CD8-positive, alpha-beta memory T cell (primary cell): ENCODE measurements at regions of chr17 and their contacts with region 1.

Region 1: GRCh38 chr17:77088455-77089123 is 52.2 kb upstream of the SEC14L1 start:
- DNase-seq: peak; percentile 78 to 92 (median 86)
- H3K4me3 ChIP-seq: peak overlapping the region; percentile 80
- H3K4me3 Mint-ChIP-seq: peak overlapping the region; percentile 90 to 99 (median 98)
- H3K27ac ChIP-seq: peak overlapping the region; percentile 88
- H3K27ac Mint-ChIP-seq: peak overlapping the region; percentile 94 to 99 (median 98)
- H3K4me1 ChIP-seq: peaks cover 28% of the 10 kb centered on the region
- H3K4me1 Mint-ChIP-seq: peaks cover 45 to 61% (median 57%) of the 10 kb centered on the region in 3 donors
- H3K27me3 ChIP-seq: peaks cover 3% of the 10 kb centered on the region
- H3K27me3 Mint-ChIP-seq: peaks cover 3 to 6% of the 10 kb centered on the region in 2 donors

Region 2: GRCh38 chr17:77036807-77037381 is 51.7 kb before region 1 on chr17:
- CTCF ChIA-PET with region 1: no interaction called
- POLR2A ChIA-PET with region 1: no interaction called
- DNase-seq: no peak
- H3K4me3 ChIP-seq: no peak overlapping the region
- H3K4me3 Mint-ChIP-seq: no peak overlapping the region
- H3K27ac ChIP-seq: no peak overlapping the region
- H3K27ac Mint-ChIP-seq: no peak overlapping the region
- H3K4me1 ChIP-seq: no peaks in the 10 kb centered on the region
- H3K4me1 Mint-ChIP-seq: no peaks in the 10 kb centered on the region
- H3K27me3 ChIP-seq: no peaks in the 10 kb centered on the region
- H3K27me3 Mint-ChIP-seq: peaks cover 6 to 40% of the 10 kb centered on the region in 2 donors

Region 3: DNA sequence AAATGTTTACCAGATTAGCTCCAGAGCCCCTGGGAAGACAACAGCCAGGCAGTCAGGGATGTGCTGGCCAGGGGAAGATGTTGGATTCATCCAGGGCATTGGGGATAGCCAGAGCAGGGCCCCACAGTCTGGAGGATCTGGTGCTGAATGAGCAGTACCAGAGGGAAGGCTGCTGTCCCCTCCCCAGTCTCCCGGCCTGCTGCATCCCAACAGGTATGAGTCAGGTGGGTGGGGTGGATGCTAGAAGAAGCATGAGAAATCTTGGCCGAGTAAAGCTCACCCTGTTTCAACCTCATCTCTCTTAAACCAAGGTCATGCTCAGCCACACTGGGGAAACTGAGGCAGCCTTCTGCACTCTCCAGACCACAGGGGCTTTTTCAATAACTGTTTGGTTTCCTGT is 19.7 kb before region 1 on chr17:
- CTCF ChIA-PET with region 1: interaction called, 11 read pairs
- POLR2A ChIA-PET with region 1: no interaction called
- DNase-seq: no peak
- H3K4me3 ChIP-seq: no peak overlapping the region
- H3K4me3 Mint-ChIP-seq: no peak overlapping the region
- H3K27ac ChIP-seq: no peak overlapping the region
- H3K27ac Mint-ChIP-seq: no peak overlapping the region
- H3K4me1 ChIP-seq: no peaks in the 10 kb centered on the region
- H3K4me1 Mint-ChIP-seq: peaks cover 0 to 3% (median 0%) of the 10 kb centered on the region in 3 donors
- H3K27me3 ChIP-seq: no peaks in the 10 kb centered on the region
- H3K27me3 Mint-ChIP-seq: peaks cover 14 to 53% of the 10 kb centered on the region in 2 donors

Region 4: DNA sequence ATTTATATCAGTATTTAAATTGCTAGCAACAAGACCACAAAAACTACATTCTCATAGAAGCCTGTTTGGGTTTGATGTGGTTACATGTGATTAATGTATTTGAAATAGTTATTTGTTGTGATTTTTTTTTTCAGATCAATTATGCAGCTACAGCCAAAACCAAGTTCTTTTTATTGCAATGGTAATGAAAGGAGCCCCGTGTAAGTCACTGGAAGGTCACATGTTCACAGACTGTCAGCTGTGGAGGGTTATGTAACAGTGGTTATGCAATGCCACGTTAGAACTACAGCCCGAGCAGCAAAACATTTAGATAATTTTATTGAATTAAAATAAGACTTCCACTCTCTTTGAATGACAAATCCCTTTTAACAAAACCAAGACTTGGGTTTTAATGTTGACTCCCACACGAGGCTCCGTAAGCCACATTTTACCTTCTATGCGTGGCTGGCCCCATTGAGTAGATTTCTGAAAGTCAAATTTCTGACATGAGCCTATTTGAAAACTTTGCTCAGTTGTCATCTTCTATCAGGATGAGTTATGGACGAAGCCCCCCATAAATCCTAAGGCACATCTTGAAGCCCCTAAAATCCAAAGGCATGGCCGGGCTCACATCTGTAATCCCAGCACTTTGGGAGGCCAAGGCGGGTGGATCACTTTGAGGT is 10.4 kb after region 1 on chr17:
- CTCF ChIA-PET with region 1: interaction called, 14 read pairs
- POLR2A ChIA-PET with region 1: no interaction called
- DNase-seq: peak in 2 of 5 donors; percentile 30 to 78
- H3K4me3 ChIP-seq: no peak overlapping the region
- H3K4me3 Mint-ChIP-seq: no peak overlapping the region
- H3K27ac ChIP-seq: no peak overlapping the region
- H3K27ac Mint-ChIP-seq: peak overlapping the region; percentile 7 to 97 (median 89)
- H3K4me1 ChIP-seq: peaks cover 14% of the 10 kb centered on the region
- H3K4me1 Mint-ChIP-seq: peaks cover 18 to 27% (median 25%) of the 10 kb centered on the region in 3 donors
- H3K27me3 ChIP-seq: no peaks in the 10 kb centered on the region
- H3K27me3 Mint-ChIP-seq: no peaks in the 10 kb centered on the region

Region 5: DNA sequence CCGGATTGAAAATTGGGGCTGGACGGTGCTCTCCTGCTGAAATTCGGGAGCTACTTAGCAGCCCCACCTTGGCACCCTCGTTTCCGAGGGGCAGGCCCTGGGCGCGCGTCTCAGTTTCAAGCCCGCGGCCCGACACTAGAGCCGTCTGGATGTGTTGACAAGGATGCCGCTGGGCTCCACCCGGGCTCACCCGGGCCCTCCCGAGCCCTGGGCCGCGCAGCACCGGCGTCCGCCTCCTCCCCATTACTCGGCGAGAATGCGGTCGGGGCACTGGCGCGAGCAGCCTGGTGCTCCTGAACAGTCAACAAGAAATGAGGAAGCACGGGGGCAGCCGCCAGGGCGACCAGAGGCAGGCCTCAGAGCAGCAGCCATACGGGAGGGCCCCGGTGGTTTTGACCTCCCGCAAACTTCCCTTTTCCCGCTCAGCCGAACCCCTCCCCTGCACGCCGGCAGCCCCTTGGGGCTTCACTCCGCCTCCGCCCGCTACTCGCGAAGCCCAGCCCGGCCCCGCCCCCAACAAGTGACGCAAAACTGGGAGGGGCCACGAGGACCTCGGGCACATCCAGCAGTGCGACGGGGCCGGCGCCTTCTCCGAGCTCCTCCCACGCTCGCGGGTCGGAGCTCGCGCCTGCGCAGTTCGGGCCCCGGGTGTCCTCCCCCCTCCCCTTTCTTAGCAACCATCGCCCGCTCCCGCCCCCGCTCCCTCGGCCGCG is 51.7 kb after region 1 on chr17:
- CTCF ChIA-PET with region 1: interaction called, 16 read pairs
- POLR2A ChIA-PET with region 1: interaction called, 19 read pairs
- DNase-seq: peak; percentile 99 to 100 (median 100)
- H3K4me3 ChIP-seq: peak overlapping the region; percentile 84
- H3K4me3 Mint-ChIP-seq: peak overlapping the region; percentile 81 to 94 (median 84)
- H3K27ac ChIP-seq: peak overlapping the region; percentile 83
- H3K27ac Mint-ChIP-seq: peak overlapping the region; percentile 90 to 98 (median 94)
- H3K4me1 ChIP-seq: peaks cover 39% of the 10 kb centered on the region
- H3K4me1 Mint-ChIP-seq: peaks cover 38 to 61% (median 50%) of the 10 kb centered on the region in 3 donors
- H3K27me3 ChIP-seq: no peaks in the 10 kb centered on the region
- H3K27me3 Mint-ChIP-seq: peaks cover 0 to 3% of the 10 kb centered on the region in 2 donors

Region 6: DNA sequence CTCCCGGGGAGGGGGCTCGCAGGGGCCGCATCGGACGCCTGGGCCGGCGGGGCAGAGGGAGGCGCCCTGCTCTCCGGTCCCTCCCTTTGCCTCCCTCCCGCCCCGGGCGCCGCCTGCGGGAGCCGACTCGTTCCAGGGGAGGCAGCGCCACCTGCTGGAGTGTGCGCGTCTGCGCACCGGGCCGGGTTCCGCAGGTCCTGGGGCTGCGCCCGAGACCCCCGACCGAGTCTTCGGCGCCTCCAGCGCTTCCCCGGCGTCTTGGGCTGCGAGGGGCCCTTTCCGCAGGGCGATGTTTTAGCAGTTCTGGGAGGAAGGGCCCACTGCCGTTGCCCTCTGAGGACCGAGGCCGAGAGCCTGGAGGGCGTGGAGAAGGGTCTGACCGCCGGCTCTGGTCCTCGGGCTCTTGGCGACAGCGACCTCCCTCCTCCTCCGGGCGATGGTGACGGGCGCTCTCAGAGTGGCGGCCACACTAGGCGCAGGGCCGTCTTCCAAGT is 158.5 kb after region 1 on chr17:
- CTCF ChIA-PET with region 1: interaction called, 41 read pairs
- POLR2A ChIA-PET with region 1: no interaction called
- DNase-seq: peak; percentile 75 to 90 (median 80)
- H3K4me3 ChIP-seq: peak overlapping the region; percentile 41
- H3K4me3 Mint-ChIP-seq: peak overlapping the region; percentile 42 to 88 (median 59)
- H3K27ac ChIP-seq: no peak overlapping the region
- H3K27ac Mint-ChIP-seq: peak overlapping the region in 1 of 8 donors; percentile 40
- H3K4me1 ChIP-seq: no peaks in the 10 kb centered on the region
- H3K4me1 Mint-ChIP-seq: peaks cover 8 to 11% (median 8%) of the 10 kb centered on the region in 3 donors
- H3K27me3 ChIP-seq: no peaks in the 10 kb centered on the region
- H3K27me3 Mint-ChIP-seq: peaks cover 9 to 35% of the 10 kb centered on the region in 2 donors